ENCODE measurements at regions of chr7 and their contacts with region 1.

Region 1: DNA sequence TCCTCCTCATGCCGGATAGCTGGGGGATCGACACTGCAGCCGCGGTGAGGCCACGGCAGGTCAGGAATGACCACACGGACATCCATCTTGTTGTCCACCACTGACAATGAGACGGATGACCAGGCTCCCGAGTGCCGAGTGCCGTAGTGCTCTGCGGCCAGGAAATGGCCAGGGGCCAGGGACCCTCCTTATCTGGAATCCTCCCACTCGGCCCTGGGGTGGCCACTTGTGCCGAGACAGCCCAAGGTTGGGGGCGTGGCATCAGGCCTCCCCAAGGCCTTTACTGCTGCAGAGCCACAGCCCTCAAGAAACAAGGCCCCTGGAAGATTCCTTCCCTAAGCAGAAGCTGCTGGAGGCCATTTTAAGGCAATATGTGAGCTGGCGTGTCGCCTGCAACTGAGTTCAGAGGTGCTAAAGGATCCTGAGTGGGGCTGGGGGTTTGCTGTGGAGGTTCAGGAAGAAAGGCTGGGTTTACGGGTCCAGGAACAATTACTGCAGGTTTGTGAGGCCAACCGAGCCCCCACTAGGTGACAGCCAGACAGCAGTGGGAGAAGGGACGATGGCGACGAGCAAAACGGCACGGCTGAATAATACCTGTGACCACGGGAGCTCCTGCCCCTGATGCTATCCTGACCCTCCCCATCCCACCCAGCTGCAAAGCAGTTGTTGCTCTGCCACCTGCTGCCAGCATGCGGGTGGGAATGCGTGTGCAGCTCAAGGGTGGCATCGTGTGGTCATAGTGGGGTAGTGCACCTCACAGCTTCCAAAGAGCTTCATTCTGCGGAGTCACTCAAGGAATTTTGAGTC is 31.6 kb upstream of the LEP start:
- DNase-seq: peak; percentile 72 to 92
- H3K4me3 ChIP-seq: no peak overlapping the region
- H3K27ac ChIP-seq: no peak overlapping the region
- H3K4me1 ChIP-seq: peaks cover 0 to 9% (median 4%) of the 10 kb centered on the region in 4 donors
- H3K27me3 ChIP-seq: peaks cover 0 to 72% (median 5%) of the 10 kb centered on the region in 3 donors
- CTCF ChIP-seq: peak in 6 of 7 experiments; percentile 54 to 99 (median 98)
- EP300 ChIP-seq: no peak
- POLR2A ChIP-seq: no peak

Region 2: GRCh38 chr7:127708788-127709187 is 500.6 kb before region 1 on chr7:
- intact Hi-C with region 1: loop called (anchors 5 kb)
- DNase-seq: peak; percentile 79 to 91
- H3K4me3 ChIP-seq: no peak overlapping the region
- H3K27ac ChIP-seq: no peak overlapping the region
- H3K4me1 ChIP-seq: peaks cover 0 to 5% (median 2%) of the 10 kb centered on the region in 4 donors
- H3K27me3 ChIP-seq: no peaks in the 10 kb centered on the region
- CTCF ChIP-seq: peak in 5 of 7 experiments; percentile 35 to 74 (median 65)
- EP300 ChIP-seq: no peak
- POLR2A ChIP-seq: no peak

Region 3: DNA sequence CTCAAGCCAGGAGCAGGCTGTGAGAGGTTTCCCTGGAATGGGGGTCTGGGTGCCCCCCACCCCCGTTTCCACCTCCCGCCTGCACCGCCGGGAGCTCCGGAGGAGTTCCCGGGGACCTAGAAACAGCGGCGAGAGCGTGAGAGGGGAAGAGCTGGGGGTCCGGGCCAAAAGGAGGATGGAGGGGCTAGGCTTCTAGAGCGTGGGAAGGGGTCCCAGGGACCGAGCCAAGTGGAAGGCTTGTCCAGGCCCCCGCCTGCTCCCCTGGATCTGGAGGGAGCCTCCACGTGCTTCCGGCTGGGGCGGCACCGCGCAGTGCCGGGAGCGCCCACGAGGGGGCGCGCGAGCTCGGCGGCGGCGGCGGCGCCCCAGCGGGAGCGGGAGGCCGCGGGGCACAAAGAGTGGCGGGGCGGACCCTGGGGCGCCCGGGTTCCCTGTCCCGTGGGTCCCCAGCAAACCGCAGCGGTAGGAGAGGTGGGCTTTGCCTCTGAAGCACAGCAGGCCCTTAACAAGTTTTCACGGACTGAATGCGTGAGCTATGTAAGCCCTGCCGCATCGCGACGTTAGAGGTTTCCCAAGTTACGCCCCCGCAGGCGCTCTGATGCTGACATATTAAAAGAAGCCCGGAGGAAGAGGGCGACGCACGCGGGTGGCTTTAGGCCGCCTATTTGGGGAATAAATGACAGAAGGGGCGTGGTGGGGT is 73.8 kb before region 1 on chr7:
- intact Hi-C with region 1: loop called (anchors 5 kb)
- DNase-seq: peak; percentile 59 to 75
- H3K4me3 ChIP-seq: peak overlapping the region; percentile 49 to 66 (median 60)
- H3K27ac ChIP-seq: peak overlapping the region in 1 of 5 donors; percentile 22
- H3K4me1 ChIP-seq: peaks cover 11 to 23% (median 17%) of the 10 kb centered on the region in 4 donors
- H3K27me3 ChIP-seq: peaks cover 0 to 62% (median 45%) of the 10 kb centered on the region in 3 donors
- CTCF ChIP-seq: peak in 5 of 7 experiments; percentile 20 to 99 (median 87)
- EP300 ChIP-seq: no peak
- POLR2A ChIP-seq: no peak

Region 4: DNA sequence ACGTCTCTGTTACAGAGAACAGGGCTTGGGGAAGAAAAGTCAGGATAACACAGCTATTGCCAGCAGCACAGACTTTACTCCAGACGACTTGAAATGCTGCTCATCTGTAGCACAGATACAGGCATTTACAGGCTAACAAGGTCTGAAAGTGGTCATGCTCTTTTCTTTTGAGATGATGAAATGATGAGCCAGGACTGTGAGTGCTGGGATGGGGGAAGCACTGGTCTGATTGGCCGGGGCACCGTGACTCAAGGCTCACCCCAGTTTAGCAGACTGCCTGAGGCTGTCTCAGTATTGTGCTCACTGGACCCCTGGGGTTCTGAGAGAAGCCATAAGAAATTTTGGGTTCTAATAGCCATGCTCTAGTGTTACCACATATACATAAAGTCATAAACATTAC is 1305.3 kb after region 1 on chr7:
- intact Hi-C with region 1: no loop called
- DNase-seq: no peak
- H3K4me3 ChIP-seq: no peak overlapping the region
- H3K27ac ChIP-seq: no peak overlapping the region
- H3K4me1 ChIP-seq: no peaks in the 10 kb centered on the region
- H3K27me3 ChIP-seq: peaks cover 0 to 3% (median 0%) of the 10 kb centered on the region in 3 donors
- CTCF ChIP-seq: no peak
- EP300 ChIP-seq: no peak
- POLR2A ChIP-seq: no peak